Activated naive CD4-positive, alpha-beta T cell treated with anti-CD3 and anti-CD28 coated beads, Interleukin-2, amount 10 ng/mL, durations not matched to agents 7 days and 5 days (primary cell): ENCODE measurements at regions of chr14 and their contacts with region 1.

Region 1: GRCh38 chr14:71320107-71320733 is 413.0 kb downstream of the PCNX1 start:
- DNase-seq: peak; percentile 99
- H3K4me3 Mint-ChIP-seq: peak within 1 kb of the TSS; percentile 89
- H3K27ac Mint-ChIP-seq: peak within 1 kb of the TSS; percentile 90
- H3K4me1 Mint-ChIP-seq: peaks cover 42% of the 10 kb centered on the region
- H3K27me3 Mint-ChIP-seq: peaks cover 12% of the 10 kb centered on the region

Region 2: GRCh38 chr14:71048393-71048792 is 271.8 kb before region 1 on chr14:
- CTCF ChIA-PET with region 1: no interaction called
- DNase-seq: no peak
- H3K4me3 Mint-ChIP-seq: no peak overlapping the region
- H3K27ac Mint-ChIP-seq: no peak overlapping the region
- H3K4me1 Mint-ChIP-seq: no peaks in the 10 kb centered on the region
- H3K27me3 Mint-ChIP-seq: no peaks in the 10 kb centered on the region

Region 3: GRCh38 chr14:71103662-71104484 is 216.3 kb before region 1 on chr14:
- CTCF ChIA-PET with region 1: interaction called, 11 read pairs
- DNase-seq: no peak
- H3K4me3 Mint-ChIP-seq: no peak overlapping the region
- H3K27ac Mint-ChIP-seq: no peak overlapping the region
- H3K4me1 Mint-ChIP-seq: no peaks in the 10 kb centered on the region
- H3K27me3 Mint-ChIP-seq: no peaks in the 10 kb centered on the region

Region 4: DNA sequence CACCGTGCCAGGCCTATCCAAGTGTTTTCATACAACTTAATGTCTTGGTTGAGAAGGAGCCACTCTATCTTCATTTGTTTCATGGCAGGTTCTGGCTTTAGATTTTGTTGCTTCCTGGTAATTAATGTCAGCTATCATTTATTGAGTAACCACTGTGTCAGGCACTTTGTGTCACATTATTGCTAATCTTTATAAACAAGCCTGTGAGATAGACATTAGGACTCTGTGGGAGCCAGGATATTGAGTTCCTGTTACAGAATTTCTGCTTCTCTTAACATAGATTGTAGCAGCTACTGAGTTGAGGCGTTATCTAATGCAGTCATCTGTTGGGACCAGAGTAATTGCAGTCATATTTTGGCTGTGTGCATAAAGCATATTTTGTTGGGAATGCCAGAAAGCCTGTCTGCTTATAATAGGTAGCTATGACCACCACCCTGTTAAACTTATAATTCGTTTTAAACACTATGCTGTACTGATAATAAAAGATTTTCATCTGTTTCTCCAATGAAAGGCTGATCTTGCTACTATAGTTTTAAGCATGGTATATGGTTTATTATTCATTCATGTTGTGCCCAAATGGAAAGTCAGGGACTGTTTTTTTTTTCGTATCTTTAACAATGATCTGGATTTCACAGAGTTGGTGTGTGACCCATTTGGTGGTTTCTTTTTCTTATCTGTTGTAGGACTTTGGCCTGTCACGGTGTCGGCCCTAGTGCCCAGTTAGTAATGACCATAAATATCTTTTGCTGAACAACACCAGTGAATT is 19.6 kb after region 1 on chr14:
- CTCF ChIA-PET with region 1: no interaction called
- DNase-seq: no peak
- H3K4me3 Mint-ChIP-seq: no peak overlapping the region
- H3K27ac Mint-ChIP-seq: no peak overlapping the region
- H3K4me1 Mint-ChIP-seq: peaks cover 5% of the 10 kb centered on the region
- H3K27me3 Mint-ChIP-seq: no peaks in the 10 kb centered on the region

Region 5: DNA sequence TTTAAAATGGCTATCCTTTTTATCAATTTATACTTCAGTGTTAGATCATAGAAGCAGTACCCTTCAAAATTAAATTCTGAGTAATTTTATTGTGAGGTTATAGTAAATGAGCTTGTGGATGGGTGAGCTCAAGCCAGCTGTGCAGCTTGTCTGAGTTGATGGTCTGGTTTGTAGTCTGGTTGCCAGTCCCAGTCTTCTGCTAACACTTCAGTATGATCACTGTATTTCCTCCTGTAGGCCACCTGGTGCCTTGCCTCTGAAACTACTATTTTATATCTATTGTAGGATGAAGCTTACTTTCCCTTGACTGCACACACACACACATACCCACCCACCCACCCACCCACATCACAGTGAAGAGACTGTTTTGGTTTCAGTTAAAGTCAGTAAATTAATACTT is 83.4 kb after region 1 on chr14:
- CTCF ChIA-PET with region 1: interaction called, 54 read pairs
- DNase-seq: peak; percentile 58
- H3K4me3 Mint-ChIP-seq: no peak overlapping the region
- H3K27ac Mint-ChIP-seq: peak overlapping the region; percentile 42
- H3K4me1 Mint-ChIP-seq: peaks cover 44% of the 10 kb centered on the region
- H3K27me3 Mint-ChIP-seq: no peaks in the 10 kb centered on the region

Region 6: GRCh38 chr14:71753126-71753830 is 433.1 kb after region 1 on chr14:
- CTCF ChIA-PET with region 1: interaction called, 24 read pairs
- DNase-seq: peak; percentile 80
- H3K4me3 Mint-ChIP-seq: no peak overlapping the region
- H3K27ac Mint-ChIP-seq: no peak overlapping the region
- H3K4me1 Mint-ChIP-seq: no peaks in the 10 kb centered on the region
- H3K27me3 Mint-ChIP-seq: peaks cover 33% of the 10 kb centered on the region